ENCODE measurements at regions of chr19 and their contacts with region 1.

Region 1: GRCh38 chr19:37906869-37907734 is at the start of gene SIPA1L3:
- DNase-seq: peak; percentile 84 to 97
- H3K4me3 ChIP-seq: peak within 1 kb of the TSS; percentile 68 to 99
- H3K27ac ChIP-seq: peak within 1 kb of the TSS in 1 of 2 donors; percentile 58
- H3K4me1 ChIP-seq: peaks cover 0 to 4% of the 10 kb centered on the region in 2 donors
- H3K27me3 ChIP-seq: no peaks in the 10 kb centered on the region
- CTCF ChIP-seq: no peak
- total RNA-seq, gene SIPA1L3: 27.1 TPM

Region 2: DNA sequence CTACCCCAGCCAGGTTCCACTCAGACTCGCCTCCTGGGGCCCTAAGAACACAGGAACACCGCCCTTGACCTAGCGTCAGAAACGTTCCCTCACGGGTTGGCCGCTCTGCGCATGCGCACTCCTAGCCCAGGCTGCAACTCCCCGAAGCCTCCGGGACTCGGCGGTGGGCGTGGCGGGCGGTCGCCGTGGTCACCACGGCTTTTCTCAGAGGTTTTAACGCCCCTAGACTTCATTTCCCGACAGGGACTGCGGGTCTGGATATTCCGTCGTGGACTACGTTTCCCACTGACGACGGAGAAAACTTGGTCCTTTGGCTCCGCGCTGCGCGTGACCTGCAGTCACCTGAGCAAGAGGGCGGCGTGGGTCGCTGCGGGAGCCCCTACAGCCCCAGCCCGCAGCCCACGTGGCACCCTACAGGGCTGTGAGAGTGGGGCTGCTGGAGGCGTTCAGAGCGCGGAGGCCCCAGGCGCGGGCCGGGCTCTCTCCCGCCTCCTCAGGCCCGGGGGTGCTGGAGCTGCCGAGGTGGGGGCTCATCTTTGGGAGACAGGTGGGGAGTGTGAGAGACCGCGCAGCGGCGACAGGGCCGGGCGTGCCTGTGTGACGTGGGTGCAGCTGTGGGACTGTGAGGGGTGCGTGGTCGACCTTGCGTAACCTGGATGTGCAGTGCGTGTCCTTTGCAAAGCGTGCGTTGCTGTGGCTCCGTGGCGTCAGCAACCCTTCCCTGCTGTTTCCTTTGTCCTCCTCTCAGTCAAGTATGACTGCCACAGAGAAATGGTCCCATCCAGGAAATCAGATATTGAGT is 89.7 kb before region 1 on chr19:
- intact Hi-C with region 1: no loop called
- DNase-seq: peak in 1 of 2 donors; percentile 73
- H3K4me3 ChIP-seq: peak overlapping the region; percentile 59 to 74
- H3K27ac ChIP-seq: peak overlapping the region in 1 of 2 donors; percentile 25
- H3K4me1 ChIP-seq: no peaks in the 10 kb centered on the region
- H3K27me3 ChIP-seq: no peaks in the 10 kb centered on the region
- CTCF ChIP-seq: no peak

Region 3: DNA sequence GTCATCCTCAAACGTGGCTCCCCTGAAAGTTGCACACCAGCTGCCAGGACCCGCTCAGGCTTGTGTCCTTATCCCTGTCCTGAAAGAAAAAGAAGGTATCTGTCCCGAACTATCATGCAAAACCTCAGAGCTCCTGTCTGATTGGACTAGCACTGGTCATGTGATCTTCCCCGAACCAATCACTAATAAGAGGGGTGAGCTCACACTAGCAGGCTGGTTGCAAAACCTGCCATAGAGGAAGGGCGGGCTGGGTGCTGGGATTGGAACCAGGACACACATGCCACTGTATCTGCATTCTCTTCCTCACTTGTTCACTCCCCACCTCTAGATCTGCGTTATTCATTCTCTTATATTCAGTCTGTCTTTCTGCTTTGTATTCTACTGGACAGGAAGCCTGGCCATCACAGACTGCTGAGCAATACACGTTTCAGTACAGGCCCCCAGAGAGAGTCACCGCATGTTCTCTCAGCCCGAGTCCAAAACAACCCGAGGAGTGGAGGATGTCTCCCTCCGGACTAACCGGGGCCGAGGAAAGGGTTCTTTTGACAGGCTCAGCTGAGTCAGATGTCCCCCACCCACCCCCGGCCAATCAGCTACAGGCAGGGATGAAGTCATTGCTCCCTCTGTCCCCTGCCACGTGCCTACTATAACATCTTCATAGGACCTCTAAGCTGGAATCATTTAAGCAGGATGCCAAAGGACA is 97.6 kb after region 1 on chr19:
- intact Hi-C with region 1: loop called (anchors 1 kb)
- DNase-seq: peak; percentile 77 to 92
- H3K4me3 ChIP-seq: peak overlapping the region; percentile 54 to 62
- H3K27ac ChIP-seq: peak overlapping the region; percentile 81 to 83
- H3K4me1 ChIP-seq: peaks cover 0 to 18% of the 10 kb centered on the region in 2 donors
- H3K27me3 ChIP-seq: no peaks in the 10 kb centered on the region
- CTCF ChIP-seq: no peak

Region 4: GRCh38 chr19:38229585-38230073 is 322.5 kb after region 1 on chr19:
- intact Hi-C with region 1: loop called (anchors 5 kb)
- DNase-seq: peak in 1 of 2 donors; percentile 77
- H3K4me3 ChIP-seq: peak overlapping the region in 1 of 2 donors; percentile 45
- H3K27ac ChIP-seq: no peak overlapping the region
- H3K4me1 ChIP-seq: peaks cover 11 to 12% of the 10 kb centered on the region in 2 donors
- H3K27me3 ChIP-seq: peaks cover 32% of the 10 kb centered on the region
- CTCF ChIP-seq: no peak